ENCODE measurements at regions of chr12 and their contacts with region 1.

Region 1: DNA sequence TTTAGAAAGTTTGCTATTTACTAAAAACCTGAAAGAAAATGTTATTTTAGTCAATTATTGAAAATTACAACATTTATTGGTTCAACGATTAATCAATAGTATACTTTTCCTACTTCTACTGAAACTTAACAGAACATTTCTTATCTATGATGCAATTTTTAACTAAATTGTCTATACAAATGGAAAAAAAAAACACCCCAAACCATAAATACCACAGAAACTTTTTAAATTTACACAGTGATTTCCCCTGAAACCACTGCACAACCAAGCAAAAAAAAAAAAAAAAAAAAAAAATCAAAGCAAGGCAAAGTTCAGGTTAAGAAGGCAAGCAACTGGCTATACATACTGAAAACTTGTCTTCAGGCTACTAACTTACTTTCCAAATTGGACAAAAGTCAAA is 71.9 kb upstream of the POC1B start:
- DNase-seq: no peak
- H3K4me3 Mint-ChIP-seq: no peak overlapping the region
- H3K27ac Mint-ChIP-seq: peak overlapping the region; percentile 88
- H3K4me1 Mint-ChIP-seq: peaks cover 19% of the 10 kb centered on the region
- H3K27me3 Mint-ChIP-seq: peaks cover 6% of the 10 kb centered on the region

Region 2: DNA sequence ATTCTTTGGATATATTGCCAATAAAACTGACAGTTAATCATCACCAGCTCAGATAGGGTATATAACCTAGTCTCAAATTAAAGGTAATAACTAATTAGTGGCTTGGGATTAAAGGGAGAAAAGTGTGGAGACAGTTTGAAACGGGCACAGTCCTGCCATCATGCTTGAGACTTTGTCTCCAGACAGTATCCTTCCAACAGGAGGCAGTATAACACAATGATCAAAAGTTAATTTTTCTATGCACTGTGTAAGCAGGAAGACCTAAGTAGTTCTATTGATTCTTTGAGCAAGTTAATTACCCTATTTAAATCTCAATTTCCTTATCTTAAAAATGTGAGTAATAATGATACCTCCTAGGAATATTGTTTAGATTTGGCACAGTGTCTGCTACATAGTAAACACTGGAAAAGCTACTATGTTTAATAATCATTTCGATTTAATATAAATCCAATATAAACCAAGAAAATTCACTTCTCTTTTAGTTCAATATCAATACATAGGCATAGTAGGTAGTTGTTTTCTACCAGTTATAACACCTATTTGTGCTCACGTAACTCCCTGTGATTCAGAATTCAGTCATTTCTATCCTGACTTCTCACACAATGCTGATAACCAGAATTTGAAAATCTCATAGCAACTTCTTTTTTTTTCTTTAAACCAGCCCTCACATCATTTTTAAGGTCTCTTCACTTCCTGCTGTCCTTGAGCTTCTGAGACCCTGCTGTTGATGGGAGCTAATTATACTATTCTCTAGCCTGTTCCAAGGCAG is 126.8 kb before region 1 on chr12:
- intact Hi-C with region 1: loop called (anchors 2 kb)
- DNase-seq: no peak
- H3K4me3 Mint-ChIP-seq: no peak overlapping the region
- H3K27ac Mint-ChIP-seq: peak overlapping the region; percentile 22
- H3K4me1 Mint-ChIP-seq: peaks cover 76% of the 10 kb centered on the region
- H3K27me3 Mint-ChIP-seq: no peaks in the 10 kb centered on the region

Region 3: DNA sequence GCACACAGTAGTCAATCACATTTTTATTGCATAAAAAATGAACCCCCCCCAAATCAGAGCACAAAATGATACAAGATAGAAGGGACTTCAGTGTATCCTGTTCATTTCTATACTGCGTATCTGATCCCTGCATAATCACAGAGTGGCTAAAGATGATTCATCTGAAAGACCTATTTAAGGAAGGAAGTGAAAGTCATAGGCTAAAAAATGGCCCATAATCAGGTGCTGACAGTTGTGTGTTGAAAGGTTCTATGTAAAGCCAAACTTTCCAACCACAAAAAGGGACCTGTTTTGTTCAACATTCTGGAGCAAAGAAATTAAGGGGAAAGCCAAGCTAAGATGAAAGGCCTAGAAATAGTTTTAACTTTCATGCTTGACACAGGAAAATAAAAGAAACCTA is 258.7 kb after region 1 on chr12:
- intact Hi-C with region 1: loop called (anchors 5 kb)
- DNase-seq: no peak
- H3K4me3 Mint-ChIP-seq: peak overlapping the region; percentile 25
- H3K27ac Mint-ChIP-seq: peak overlapping the region; percentile 62
- H3K4me1 Mint-ChIP-seq: peaks cover 40% of the 10 kb centered on the region
- H3K27me3 Mint-ChIP-seq: no peaks in the 10 kb centered on the region

Region 4: GRCh38 chr12:89960011-89960507 is 362.3 kb after region 1 on chr12:
- intact Hi-C with region 1: loop called (anchors 5 kb)
- DNase-seq: peak; percentile 18
- H3K4me3 Mint-ChIP-seq: no peak overlapping the region
- H3K27ac Mint-ChIP-seq: no peak overlapping the region
- H3K4me1 Mint-ChIP-seq: peaks cover 20% of the 10 kb centered on the region
- H3K27me3 Mint-ChIP-seq: peaks cover 17% of the 10 kb centered on the region

Measured in activated T-helper 1 cell treated with anti-CD3 and anti-CD28 coated beads, Interleukin-12 subunit alpha, Interleukin-12 subunit beta, Interleukin-2, Interleukin-4 antibody, amounts not matched to agents 30 ng/mL and 10 ng/mL and 1 ng/mL, durations not matched to agents 14 hours and 24 hours and 36 hours (primary cell).